A673 (cell line): ENCODE measurements at regions of chr12 and their contacts with region 1.

Region 1: GRCh38 chr12:91326058-91327027 is 143.7 kb upstream of the DCN start:
- DNase-seq: peak; percentile 61
- H3K4me3 ChIP-seq: no peak overlapping the region
- H3K27ac ChIP-seq: no peak overlapping the region
- H3K4me1 ChIP-seq: no peaks in the 10 kb centered on the region
- H3K27me3 ChIP-seq: no peaks in the 10 kb centered on the region
- CTCF ChIP-seq: peak; percentile 81

Region 2: DNA sequence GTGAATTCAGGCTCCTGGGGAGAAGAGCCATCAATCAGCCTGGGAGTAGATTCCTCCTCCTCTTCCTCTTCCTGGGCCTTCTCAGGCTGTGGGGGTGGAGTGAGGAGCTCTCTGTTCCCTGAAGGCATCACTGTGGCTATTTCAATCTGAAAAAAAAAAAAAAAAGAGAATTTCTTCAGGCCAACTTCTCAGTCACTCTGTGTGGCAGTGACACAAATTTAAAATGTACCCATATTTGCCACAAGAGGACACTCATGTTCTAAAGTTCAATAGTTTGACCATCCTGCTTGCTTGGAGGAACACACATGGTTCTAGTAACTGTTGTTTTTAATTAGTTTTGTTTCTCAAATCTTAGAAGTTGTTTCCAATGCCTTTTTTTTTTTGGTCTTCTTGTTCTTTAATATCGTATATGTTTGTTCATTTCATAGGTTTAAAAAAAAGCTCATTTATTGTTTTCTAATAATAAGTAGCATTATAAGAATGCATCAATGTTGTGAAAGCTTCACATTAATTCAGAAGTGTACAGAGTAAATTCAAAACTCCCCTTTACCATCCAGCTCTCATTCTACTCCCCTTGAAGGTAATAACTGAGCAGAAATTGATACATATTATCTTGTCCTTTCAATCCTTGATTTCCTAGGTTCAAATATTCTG is 348.1 kb before region 1 on chr12:
- CTCF ChIA-PET with region 1: no interaction called
- POLR2A ChIA-PET with region 1: interaction called, 3 read pairs
- intact Hi-C with region 1: loop called (anchors 2 kb)
- DNase-seq: peak; percentile 64
- H3K4me3 ChIP-seq: no peak overlapping the region
- H3K27ac ChIP-seq: no peak overlapping the region
- H3K4me1 ChIP-seq: no peaks in the 10 kb centered on the region
- H3K27me3 ChIP-seq: no peaks in the 10 kb centered on the region
- CTCF ChIP-seq: peak; percentile 70

Region 3: GRCh38 chr12:91109148-91109564 is 217.2 kb before region 1 on chr12:
- CTCF ChIA-PET with region 1: interaction called, 3 read pairs
- POLR2A ChIA-PET with region 1: no interaction called
- intact Hi-C with region 1: loop called (anchors 5 kb)
- DNase-seq: peak; percentile 64
- H3K4me3 ChIP-seq: no peak overlapping the region
- H3K27ac ChIP-seq: no peak overlapping the region
- H3K4me1 ChIP-seq: no peaks in the 10 kb centered on the region
- H3K27me3 ChIP-seq: no peaks in the 10 kb centered on the region
- CTCF ChIP-seq: peak; percentile 86

Region 4: DNA sequence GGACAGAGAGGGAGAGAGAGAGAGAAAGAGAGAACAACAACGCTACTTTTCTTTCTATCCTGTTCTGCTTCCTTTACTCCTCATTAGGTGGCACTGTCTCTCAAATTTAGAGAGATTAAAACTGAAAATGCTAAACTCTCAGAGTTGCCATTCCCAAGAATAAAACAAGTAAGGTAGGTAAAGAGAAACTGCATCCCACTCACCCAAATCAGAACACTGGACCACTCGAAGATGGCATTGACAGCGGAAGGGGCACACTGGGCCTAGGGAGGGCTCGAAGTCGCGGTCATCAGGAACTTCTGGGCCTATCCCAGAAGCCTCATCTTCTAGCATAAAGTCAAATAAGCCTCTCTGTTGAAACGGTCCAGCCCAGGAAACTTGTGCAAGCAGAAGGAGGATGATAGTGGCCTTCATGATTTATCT is 148.2 kb before region 1 on chr12:
- CTCF ChIA-PET with region 1: interaction called, 5 read pairs
- POLR2A ChIA-PET with region 1: no interaction called
- intact Hi-C with region 1: loop called (anchors 2 kb)
- DNase-seq: peak; percentile 27
- H3K4me3 ChIP-seq: no peak overlapping the region
- H3K27ac ChIP-seq: no peak overlapping the region
- H3K4me1 ChIP-seq: peaks cover 11% of the 10 kb centered on the region
- H3K27me3 ChIP-seq: no peaks in the 10 kb centered on the region
- CTCF ChIP-seq: peak; percentile 64

Region 5: DNA sequence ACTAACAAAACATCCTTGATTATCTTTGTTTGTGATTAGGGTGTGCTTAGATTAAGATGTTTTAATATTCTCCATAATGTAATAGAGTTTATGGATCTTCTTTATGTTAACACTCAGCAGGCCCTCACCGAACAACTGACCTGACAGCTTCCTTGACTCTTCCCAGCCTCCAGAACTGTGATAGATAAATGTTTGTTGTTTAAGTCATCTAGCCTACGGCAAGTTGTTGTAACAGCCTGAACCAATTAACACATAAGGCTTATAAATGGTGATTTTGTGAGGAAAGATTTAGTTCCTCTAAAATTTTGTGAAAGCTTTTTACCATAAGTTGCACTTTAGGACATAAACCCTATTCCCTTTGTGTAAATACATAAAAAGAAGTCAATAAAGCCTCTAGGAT is 12.8 kb after region 1 on chr12:
- CTCF ChIA-PET with region 1: no interaction called
- POLR2A ChIA-PET with region 1: no interaction called
- intact Hi-C with region 1: no loop called
- DNase-seq: no peak
- H3K4me3 ChIP-seq: no peak overlapping the region
- H3K27ac ChIP-seq: no peak overlapping the region
- H3K4me1 ChIP-seq: no peaks in the 10 kb centered on the region
- H3K27me3 ChIP-seq: no peaks in the 10 kb centered on the region
- CTCF ChIP-seq: no peak